GM12878 (cell line): ENCODE measurements at regions of chr2 and their contacts with region 1.

Region 1: DNA sequence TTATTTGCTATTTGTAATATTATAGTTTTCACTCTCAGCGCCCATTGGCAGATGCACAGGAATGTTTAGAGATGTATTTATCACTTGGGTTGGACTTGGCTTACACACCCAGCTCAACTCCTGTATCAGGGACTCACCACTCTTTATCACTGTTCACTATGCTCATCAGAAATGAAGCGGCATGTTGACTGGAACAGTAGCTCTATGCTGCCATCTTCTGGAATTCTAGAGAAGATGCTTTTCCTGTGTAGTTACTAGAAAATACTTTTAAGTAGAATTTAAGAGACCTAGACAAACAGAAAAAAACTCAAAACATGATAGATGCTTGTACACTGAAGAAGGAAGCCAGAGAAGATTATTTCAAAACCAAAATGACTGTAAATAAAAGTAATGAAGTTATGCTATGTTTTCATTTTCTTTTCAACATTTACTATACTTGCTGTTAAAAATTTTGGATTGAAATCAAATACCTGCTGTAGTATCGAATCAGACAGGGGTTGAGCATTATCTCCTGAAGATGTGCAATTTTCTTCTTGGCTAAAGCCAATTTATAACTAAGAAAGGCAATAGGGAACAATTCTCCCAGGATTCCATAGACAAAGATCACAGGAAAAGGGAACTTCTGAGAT is 47.4 kb upstream of the NXPH2 start:
- DNase-seq: peak; percentile 31
- ATAC-seq: peak; percentile 91
- H3K4me3 ChIP-seq: no peak overlapping the region
- H3K27ac ChIP-seq: no peak overlapping the region
- H3K4me1 ChIP-seq: no peaks in the 10 kb centered on the region
- H3K27me3 ChIP-seq: no peaks in the 10 kb centered on the region; a peak in 1 of 4 replicates
- CTCF ChIP-seq: peak; percentile 52 to 76 (median 59)
- EP300 ChIP-seq: no peak
- POLR2A ChIP-seq: no peak
- RAD21 ChIP-seq: peak; percentile 81

Region 2: DNA sequence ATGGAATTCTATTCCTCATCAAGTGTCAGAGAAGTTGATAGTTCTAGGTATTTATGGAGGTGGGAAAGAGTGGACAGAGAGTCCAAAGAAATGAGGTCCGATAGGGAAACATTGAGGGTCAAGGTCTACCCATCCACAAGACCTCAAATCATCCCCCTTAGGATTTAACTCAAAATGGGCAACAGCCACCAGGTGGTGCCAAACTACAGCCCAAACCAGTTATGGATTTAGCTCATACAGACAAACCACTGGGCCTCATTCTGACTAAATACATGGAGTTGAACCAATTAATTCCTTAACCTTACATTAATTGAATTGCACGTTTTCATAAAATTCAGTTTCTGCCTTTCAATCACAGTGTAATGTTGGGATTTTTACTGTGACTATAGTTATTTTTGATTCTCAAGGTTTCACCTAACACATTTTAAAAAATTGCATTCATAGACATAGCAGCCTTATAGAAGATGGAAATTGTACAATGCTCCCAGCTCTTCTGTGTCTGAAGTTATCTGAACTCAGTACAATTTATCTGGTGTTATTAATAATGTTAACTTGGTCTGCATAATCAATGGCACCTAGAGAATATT is 961.5 kb before region 1 on chr2:
- CTCF ChIA-PET with region 1: interaction called, 29 read pairs
- POLR2A ChIA-PET with region 1: no interaction called
- RAD21 ChIA-PET with region 1: interaction called, 14 read pairs
- SMC1A ChIA-PET with region 1: interaction called, 11 read pairs
- in situ Hi-C with region 1: no loop called
- intact Hi-C with region 1: loop called (anchors 1 kb)
- DNase-seq: no peak
- ATAC-seq: peak; percentile 89
- H3K4me3 ChIP-seq: no peak overlapping the region
- H3K27ac ChIP-seq: no peak overlapping the region
- H3K4me1 ChIP-seq: no peaks in the 10 kb centered on the region
- H3K27me3 ChIP-seq: no peaks in the 10 kb centered on the region
- CTCF ChIP-seq: peak; percentile 66 to 79 (median 67); a peak in 5 of 6 replicates
- EP300 ChIP-seq: no peak
- POLR2A ChIP-seq: no peak
- RAD21 ChIP-seq: peak; percentile 81

Region 3: DNA sequence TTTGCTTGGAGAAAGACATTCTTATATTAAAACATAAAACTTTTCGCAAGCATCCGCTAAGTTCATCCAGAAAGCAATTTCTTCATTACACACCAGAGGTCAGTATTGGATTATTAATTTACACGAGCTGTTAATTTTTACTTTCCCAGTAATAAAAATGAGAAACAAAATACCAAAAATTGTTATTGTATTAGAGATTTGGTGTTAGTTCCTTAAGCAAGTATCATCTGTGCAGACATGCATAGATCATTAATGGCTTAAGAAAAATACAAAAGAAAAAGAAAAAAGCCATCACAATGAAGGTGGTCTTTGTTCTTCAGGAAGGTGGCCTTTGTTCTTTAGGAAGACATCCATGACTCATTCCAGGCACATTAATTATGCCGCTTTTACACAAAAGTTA is 916.9 kb before region 1 on chr2:
- CTCF ChIA-PET with region 1: interaction called, 71 read pairs
- POLR2A ChIA-PET with region 1: no interaction called
- RAD21 ChIA-PET with region 1: interaction called, 21 read pairs
- SMC1A ChIA-PET with region 1: interaction called, 37 read pairs
- in situ Hi-C with region 1: loop called (anchors 5 kb)
- intact Hi-C with region 1: loop called (anchors 1 kb)
- DNase-seq: no peak
- ATAC-seq: no peak
- H3K4me3 ChIP-seq: no peak overlapping the region
- H3K27ac ChIP-seq: no peak overlapping the region
- H3K4me1 ChIP-seq: no peaks in the 10 kb centered on the region
- H3K27me3 ChIP-seq: no peaks in the 10 kb centered on the region; a peak in 1 of 4 replicates
- CTCF ChIP-seq: peak; percentile 28 to 53 (median 28); a peak in 4 of 6 replicates
- EP300 ChIP-seq: no peak
- POLR2A ChIP-seq: no peak
- RAD21 ChIP-seq: peak; percentile 62

Region 4: DNA sequence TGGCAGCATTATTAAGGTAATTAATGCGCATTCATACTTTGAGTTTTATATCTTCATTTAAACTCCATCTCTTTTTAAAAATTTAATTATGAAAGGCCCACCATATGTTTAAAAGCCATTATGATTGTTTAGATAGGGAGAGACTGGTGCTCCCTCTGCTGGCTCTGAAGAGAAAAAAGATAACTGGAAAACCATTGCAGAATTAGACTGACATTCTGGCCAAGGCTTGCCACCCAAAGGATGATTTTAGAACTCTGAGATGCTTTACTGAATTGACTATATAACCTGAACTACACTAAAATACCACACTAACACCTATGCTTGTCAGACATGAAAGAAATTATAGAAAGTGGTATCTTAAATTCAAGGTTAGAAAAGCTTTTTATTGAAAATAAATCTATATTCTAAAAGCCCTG is 453.5 kb before region 1 on chr2:
- CTCF ChIA-PET with region 1: interaction called, 12 read pairs
- POLR2A ChIA-PET with region 1: no interaction called
- RAD21 ChIA-PET with region 1: interaction called, 6 read pairs
- SMC1A ChIA-PET with region 1: interaction called, 8 read pairs
- in situ Hi-C with region 1: loop called (anchors 10 kb)
- intact Hi-C with region 1: no loop called
- DNase-seq: peak; percentile 12
- ATAC-seq: peak; percentile 72
- H3K4me3 ChIP-seq: no peak overlapping the region
- H3K27ac ChIP-seq: no peak overlapping the region
- H3K4me1 ChIP-seq: no peaks in the 10 kb centered on the region
- H3K27me3 ChIP-seq: no peaks in the 10 kb centered on the region
- CTCF ChIP-seq: peak; percentile 49 to 66 (median 59)
- EP300 ChIP-seq: no peak
- POLR2A ChIP-seq: no peak
- RAD21 ChIP-seq: peak; percentile 86

Region 5: GRCh38 chr2:138486363-138487198 is 341.0 kb before region 1 on chr2:
- CTCF ChIA-PET with region 1: interaction called, 10 read pairs
- POLR2A ChIA-PET with region 1: no interaction called
- RAD21 ChIA-PET with region 1: no interaction called
- SMC1A ChIA-PET with region 1: no interaction called
- in situ Hi-C with region 1: no loop called
- intact Hi-C with region 1: no loop called
- DNase-seq: no peak
- ATAC-seq: peak; percentile 48; the same call in 2 of the 3 replicates
- H3K4me3 ChIP-seq: no peak overlapping the region
- H3K27ac ChIP-seq: no peak overlapping the region
- H3K4me1 ChIP-seq: no peaks in the 10 kb centered on the region
- H3K27me3 ChIP-seq: no peaks in the 10 kb centered on the region
- CTCF ChIP-seq: peak; percentile 19 to 21 (median 21); a peak in 4 of 6 replicates
- EP300 ChIP-seq: no peak
- POLR2A ChIP-seq: no peak
- RAD21 ChIP-seq: peak; percentile 31; the same call in 1 of the 2 replicates

Region 6: DNA sequence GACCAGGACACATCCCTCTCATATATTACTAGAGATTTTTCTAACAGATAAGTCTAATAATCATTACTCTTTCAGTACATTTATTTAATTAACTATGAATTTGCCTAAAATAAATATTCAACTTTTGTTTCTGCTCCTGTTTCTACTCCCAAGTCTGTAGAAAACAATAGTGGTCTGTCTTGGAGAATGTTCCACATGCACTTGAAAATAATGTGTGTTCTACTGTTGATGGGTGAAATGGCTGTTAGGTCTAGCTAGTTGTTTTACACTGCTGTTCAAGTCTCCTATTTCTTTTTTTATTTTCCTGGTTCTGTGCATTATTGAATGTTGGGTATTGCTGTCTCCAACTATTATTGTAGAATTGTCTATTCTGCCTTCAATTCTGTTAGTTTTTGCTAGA is 278.7 kb before region 1 on chr2:
- CTCF ChIA-PET with region 1: no interaction called
- POLR2A ChIA-PET with region 1: no interaction called
- RAD21 ChIA-PET with region 1: no interaction called
- SMC1A ChIA-PET with region 1: no interaction called
- in situ Hi-C with region 1: no loop called
- intact Hi-C with region 1: no loop called
- DNase-seq: no peak
- ATAC-seq: no peak
- H3K4me3 ChIP-seq: no peak overlapping the region
- H3K27ac ChIP-seq: no peak overlapping the region
- H3K4me1 ChIP-seq: no peaks in the 10 kb centered on the region
- H3K27me3 ChIP-seq: no peaks in the 10 kb centered on the region
- CTCF ChIP-seq: no peak
- EP300 ChIP-seq: no peak
- POLR2A ChIP-seq: no peak
- RAD21 ChIP-seq: no peak

Region 7: GRCh38 chr2:138741851-138742250 is 85.7 kb before region 1 on chr2:
- CTCF ChIA-PET with region 1: no interaction called
- POLR2A ChIA-PET with region 1: no interaction called
- RAD21 ChIA-PET with region 1: no interaction called
- SMC1A ChIA-PET with region 1: no interaction called
- in situ Hi-C with region 1: no loop called
- intact Hi-C with region 1: no loop called
- DNase-seq: no peak
- ATAC-seq: no peak
- H3K4me3 ChIP-seq: no peak overlapping the region
- H3K27ac ChIP-seq: no peak overlapping the region
- H3K4me1 ChIP-seq: no peaks in the 10 kb centered on the region
- H3K27me3 ChIP-seq: no peaks in the 10 kb centered on the region; a peak in 1 of 4 replicates
- CTCF ChIP-seq: no peak
- EP300 ChIP-seq: no peak
- POLR2A ChIP-seq: no peak
- RAD21 ChIP-seq: no peak

Region 8: DNA sequence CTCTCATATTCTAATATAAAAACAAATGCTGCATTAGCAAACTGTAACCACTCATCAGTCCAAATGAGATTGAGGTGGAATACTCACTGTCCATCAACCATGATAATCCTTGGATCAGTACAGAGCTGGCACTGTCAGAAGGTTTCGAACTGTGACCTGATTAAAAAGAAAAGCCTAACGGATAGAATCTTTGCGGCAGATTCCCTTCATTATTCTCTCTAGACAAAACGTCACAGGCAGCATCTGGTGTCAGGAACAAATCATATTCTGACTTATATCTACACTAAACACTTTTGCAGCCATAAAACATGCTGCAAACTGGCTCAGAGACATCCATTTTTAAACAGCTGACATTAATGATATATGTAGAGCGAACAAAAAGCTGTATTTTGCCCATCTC is 630.3 kb after region 1 on chr2:
- CTCF ChIA-PET with region 1: no interaction called
- POLR2A ChIA-PET with region 1: no interaction called
- RAD21 ChIA-PET with region 1: no interaction called
- SMC1A ChIA-PET with region 1: no interaction called
- in situ Hi-C with region 1: no loop called
- intact Hi-C with region 1: no loop called
- DNase-seq: no peak
- ATAC-seq: no peak
- H3K4me3 ChIP-seq: no peak overlapping the region
- H3K27ac ChIP-seq: no peak overlapping the region
- H3K4me1 ChIP-seq: no peaks in the 10 kb centered on the region
- H3K27me3 ChIP-seq: no peaks in the 10 kb centered on the region
- CTCF ChIP-seq: no peak
- EP300 ChIP-seq: no peak
- POLR2A ChIP-seq: no peak
- RAD21 ChIP-seq: no peak